ENCODE measurements at regions of chr21 and their contacts with region 1.

Region 1: DNA sequence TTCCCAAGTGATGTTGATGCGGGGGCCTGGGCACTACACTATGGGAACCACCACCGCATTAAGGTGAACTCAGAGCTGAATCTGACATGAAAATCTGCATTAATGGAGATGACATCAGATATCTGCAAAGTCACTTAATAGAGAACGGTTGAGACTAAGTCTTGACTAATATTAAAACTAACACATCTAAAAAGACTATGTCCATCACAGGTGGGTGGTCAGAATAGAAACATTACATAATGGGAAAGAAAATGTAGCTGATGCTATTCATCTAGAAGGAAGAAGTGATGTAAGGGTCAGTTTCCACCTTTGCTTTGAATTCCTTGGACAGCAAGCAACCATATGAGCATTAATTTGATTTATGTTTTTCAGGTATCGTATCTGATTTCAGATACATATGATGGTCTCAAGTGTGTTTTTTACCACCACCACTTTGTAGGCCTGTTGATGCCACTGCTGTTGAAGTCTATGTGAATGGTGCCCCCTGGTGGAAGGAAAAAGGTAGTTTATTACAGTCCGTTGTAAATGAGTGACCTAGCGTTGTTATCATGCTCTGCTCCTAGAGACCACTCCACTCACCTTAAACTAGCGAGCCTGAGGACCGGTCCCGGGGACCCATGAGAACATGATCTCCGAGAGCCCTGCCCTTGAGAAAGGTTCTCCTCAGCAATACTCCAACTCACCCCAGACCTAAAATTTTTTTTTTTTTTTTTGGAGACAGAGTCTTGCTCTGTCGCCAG is 73.5 kb downstream of the BACH1 start:
- DNase-seq: peak; percentile 58 to 72 (median 67)
- H3K4me3 ChIP-seq: no peak overlapping the region
- H3K4me3 Mint-ChIP-seq: no peak overlapping the region
- H3K27ac ChIP-seq: no peak overlapping the region
- H3K27ac Mint-ChIP-seq: peak overlapping the region in 3 of 7 donors; percentile 57 to 63 (median 63)
- H3K4me1 ChIP-seq: peaks cover 8% of the 10 kb centered on the region
- H3K4me1 Mint-ChIP-seq: peaks cover 9 to 15% (median 10%) of the 10 kb centered on the region in 4 donors
- H3K27me3 ChIP-seq: no peaks in the 10 kb centered on the region
- H3K27me3 Mint-ChIP-seq: no peaks in the 10 kb centered on the region

Region 2: DNA sequence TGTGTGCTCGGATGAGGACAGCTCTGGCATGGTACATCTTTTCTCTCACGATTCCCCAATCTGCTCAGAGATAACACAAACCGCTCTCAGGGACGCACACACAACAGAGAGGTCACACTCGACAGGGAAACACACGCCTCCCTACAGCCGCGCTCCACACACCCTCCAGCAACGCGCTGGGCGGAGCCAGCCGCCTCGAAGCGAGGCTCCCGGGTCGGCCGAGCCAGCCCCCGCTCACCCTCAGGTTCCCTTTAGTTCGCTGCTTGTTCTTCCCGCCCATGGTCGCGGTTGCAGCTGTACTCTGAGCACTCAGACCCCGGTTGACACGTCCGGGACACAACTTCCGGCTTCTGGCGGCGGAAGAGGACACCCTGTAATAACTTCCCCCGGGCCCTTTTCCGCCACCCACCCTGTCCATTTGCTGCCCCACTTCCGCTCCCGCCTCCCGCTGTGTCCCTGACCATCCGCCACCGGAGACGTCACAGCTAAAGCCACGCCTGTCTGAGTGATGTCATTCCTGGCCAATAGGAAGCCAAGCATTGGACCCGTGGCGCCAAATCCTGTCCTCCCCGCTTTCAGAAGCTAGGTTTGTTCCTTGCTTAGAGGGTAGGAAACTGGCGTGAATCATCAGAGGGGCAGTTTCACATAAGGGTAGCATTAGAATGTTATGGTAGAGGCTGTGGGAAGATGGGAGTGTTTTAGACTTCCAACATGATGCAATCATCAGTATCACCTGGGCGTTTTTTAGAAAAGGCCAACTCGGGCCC is 379.5 kb before region 1 on chr21 and contains the start of gene LTN1:
- CTCF ChIA-PET with region 1: no interaction called
- POLR2A ChIA-PET with region 1: no interaction called
- intact Hi-C with region 1: no loop called
- DNase-seq: peak; percentile 98 to 99 (median 99)
- H3K4me3 ChIP-seq: peak within 1 kb of the TSS; percentile 87 to 98
- H3K4me3 Mint-ChIP-seq: peak within 1 kb of the TSS; percentile 90 to 98 (median 96)
- H3K27ac ChIP-seq: peak within 1 kb of the TSS; percentile 82
- H3K27ac Mint-ChIP-seq: peak within 1 kb of the TSS; percentile 85 to 100 (median 99)
- H3K4me1 ChIP-seq: peaks cover 31% of the 10 kb centered on the region
- H3K4me1 Mint-ChIP-seq: peaks cover 24 to 54% (median 36%) of the 10 kb centered on the region in 4 donors
- H3K27me3 ChIP-seq: no peaks in the 10 kb centered on the region
- H3K27me3 Mint-ChIP-seq: no peaks in the 10 kb centered on the region
- total RNA-seq, gene LTN1: 34.6 to 39.5 TPM

Region 3: GRCh38 chr21:29091032-29091431 is 281.2 kb before region 1 on chr21:
- CTCF ChIA-PET with region 1: interaction called, 241 read pairs
- POLR2A ChIA-PET with region 1: no interaction called
- intact Hi-C with region 1: loop called (anchors 1 kb)
- DNase-seq: no peak
- H3K4me3 ChIP-seq: no peak overlapping the region
- H3K4me3 Mint-ChIP-seq: no peak overlapping the region
- H3K27ac ChIP-seq: no peak overlapping the region
- H3K27ac Mint-ChIP-seq: no peak overlapping the region
- H3K4me1 ChIP-seq: no peaks in the 10 kb centered on the region
- H3K4me1 Mint-ChIP-seq: no peaks in the 10 kb centered on the region
- H3K27me3 ChIP-seq: no peaks in the 10 kb centered on the region
- H3K27me3 Mint-ChIP-seq: no peaks in the 10 kb centered on the region

Region 4: DNA sequence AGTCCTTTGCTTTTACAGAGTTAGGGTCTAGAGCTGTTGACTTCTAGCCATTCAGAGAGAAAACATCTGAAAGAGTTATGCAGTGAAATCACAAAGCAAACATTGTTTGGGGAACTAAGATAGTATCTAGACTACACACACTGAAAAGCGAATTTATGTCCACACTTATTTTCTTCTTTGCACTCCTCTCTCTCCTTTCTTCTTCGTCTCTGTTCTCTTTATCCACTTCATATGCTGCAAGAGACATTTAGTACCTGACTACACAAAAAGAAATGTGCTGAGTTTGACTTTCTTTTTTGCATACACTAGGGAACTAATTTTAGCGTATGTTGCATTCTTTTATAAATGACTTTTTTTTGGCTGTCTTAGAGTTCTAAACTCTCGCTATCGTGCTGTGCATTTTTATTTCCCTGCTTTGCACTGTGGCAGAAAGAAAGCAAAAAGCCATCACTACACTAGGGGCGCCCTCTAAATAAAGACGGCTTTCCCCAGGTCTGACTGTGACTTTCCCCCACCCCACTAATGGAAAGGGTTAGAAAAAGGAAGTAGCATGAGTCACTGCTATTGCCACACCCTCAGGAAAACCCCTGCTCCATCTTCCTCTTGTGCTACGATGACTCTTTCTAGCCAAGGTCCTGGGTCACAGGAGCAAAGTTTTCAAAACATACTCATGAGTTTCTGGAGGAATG is 176.1 kb before region 1 on chr21:
- CTCF ChIA-PET with region 1: no interaction called
- POLR2A ChIA-PET with region 1: no interaction called
- intact Hi-C with region 1: loop called (anchors 1 kb)
- DNase-seq: peak; percentile 62 to 88 (median 70)
- H3K4me3 ChIP-seq: peak overlapping the region in 1 of 2 donors; percentile 42
- H3K4me3 Mint-ChIP-seq: peak overlapping the region; percentile 79 to 90 (median 84)
- H3K27ac ChIP-seq: no peak overlapping the region
- H3K27ac Mint-ChIP-seq: peak overlapping the region; percentile 84 to 96 (median 90)
- H3K4me1 ChIP-seq: peaks cover 22% of the 10 kb centered on the region
- H3K4me1 Mint-ChIP-seq: peaks cover 10 to 19% (median 17%) of the 10 kb centered on the region in 4 donors
- H3K27me3 ChIP-seq: no peaks in the 10 kb centered on the region
- H3K27me3 Mint-ChIP-seq: peaks cover 0 to 3% of the 10 kb centered on the region in 2 donors

Region 5: DNA sequence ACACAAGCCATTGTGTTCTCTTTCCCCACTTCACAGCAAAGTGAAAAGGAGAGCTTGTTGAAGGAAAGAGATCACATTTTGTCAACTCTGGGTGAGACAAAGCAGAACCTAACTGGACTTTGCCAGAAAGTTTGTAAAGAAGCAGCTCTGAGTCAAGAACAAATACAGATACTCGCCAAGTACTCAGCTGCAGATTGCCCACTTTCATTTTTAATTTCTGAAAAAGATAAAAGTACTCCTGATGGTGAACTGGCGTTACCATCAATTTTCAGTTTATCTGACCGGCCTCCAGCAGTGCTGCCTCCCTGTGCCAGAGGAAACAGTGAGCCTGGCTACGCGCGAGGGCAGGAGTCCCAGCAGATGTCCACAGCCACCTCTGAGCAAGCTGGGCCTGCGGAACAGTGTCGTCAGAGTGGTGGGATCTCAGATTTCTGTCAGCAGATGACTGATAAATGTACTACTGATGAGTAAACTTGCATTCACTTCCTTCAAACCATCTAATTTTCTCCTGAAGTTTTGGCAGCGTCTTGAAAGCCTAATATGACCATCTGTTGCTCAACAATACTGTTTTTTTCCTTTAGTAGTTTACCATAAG is 29.8 kb before region 1 on chr21:
- CTCF ChIA-PET with region 1: interaction called, 11 read pairs
- POLR2A ChIA-PET with region 1: no interaction called
- intact Hi-C with region 1: no loop called
- DNase-seq: no peak
- H3K4me3 ChIP-seq: no peak overlapping the region
- H3K4me3 Mint-ChIP-seq: peak overlapping the region in 5 of 8 donors; percentile 11 to 58 (median 22)
- H3K27ac ChIP-seq: no peak overlapping the region
- H3K27ac Mint-ChIP-seq: peak overlapping the region in 5 of 7 donors; percentile 49 to 79 (median 58)
- H3K4me1 ChIP-seq: peaks cover 9% of the 10 kb centered on the region
- H3K4me1 Mint-ChIP-seq: peaks cover 13 to 19% (median 17%) of the 10 kb centered on the region in 4 donors
- H3K27me3 ChIP-seq: no peaks in the 10 kb centered on the region
- H3K27me3 Mint-ChIP-seq: no peaks in the 10 kb centered on the region

Region 6: DNA sequence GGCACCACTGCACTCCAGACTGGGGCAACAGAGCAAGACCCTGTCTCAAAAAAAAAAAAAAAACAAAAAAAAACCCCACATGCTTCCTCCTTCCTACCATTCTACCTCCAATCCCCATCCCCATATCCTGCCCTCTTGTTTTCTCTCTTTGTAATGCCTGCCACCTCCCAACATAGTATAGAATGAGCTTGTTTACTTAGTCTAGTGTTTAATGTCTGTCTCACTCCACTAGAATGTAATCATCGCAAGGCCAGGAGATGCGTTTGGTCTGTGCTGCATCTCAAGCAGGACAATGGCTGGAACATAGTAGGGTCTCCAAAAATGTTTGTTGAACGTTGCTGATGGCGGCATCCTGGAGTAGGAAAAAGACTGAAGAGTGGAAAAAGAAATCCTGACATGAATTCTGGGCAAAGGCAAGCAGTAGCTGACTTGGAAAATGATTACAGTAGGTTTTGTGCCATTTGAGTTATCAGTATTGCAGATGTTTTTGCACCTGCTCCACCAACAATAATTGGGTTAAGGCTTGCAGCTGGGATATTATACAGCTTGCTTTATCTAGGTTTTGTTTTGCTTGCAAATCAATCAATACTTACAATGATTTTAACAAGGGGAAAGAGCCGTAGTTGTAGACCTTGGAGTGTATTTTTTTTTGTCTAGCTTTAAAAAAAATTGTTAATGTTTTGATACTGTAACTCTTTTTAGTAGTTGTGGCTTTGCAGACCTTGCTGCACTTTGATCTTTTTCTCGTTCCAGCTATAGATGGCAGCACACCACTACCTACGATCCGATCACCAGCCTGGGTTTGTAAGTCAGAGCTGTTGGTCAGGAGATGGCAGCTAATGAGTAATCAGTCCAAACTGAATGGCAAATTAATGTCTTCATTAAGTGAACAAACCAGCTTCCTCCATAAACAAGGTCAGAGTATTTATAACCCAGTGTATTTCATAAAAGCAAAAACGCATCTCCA is 11.2 kb before region 1 on chr21:
- CTCF ChIA-PET with region 1: interaction called, 17 read pairs
- POLR2A ChIA-PET with region 1: no interaction called
- intact Hi-C with region 1: no loop called
- DNase-seq: peak in 3 of 5 donors; percentile 21 to 33 (median 26)
- H3K4me3 ChIP-seq: no peak overlapping the region
- H3K4me3 Mint-ChIP-seq: no peak overlapping the region
- H3K27ac ChIP-seq: no peak overlapping the region
- H3K27ac Mint-ChIP-seq: peak overlapping the region in 4 of 7 donors; percentile 18 to 70 (median 66)
- H3K4me1 ChIP-seq: peaks cover 5% of the 10 kb centered on the region
- H3K4me1 Mint-ChIP-seq: peaks cover 8 to 27% (median 13%) of the 10 kb centered on the region in 4 donors
- H3K27me3 ChIP-seq: no peaks in the 10 kb centered on the region
- H3K27me3 Mint-ChIP-seq: no peaks in the 10 kb centered on the region

Measured in CD4-positive, alpha-beta memory T cell (primary cell).